ENCODE measurements at regions of chr10 and their contacts with region 1.

Region 1: GRCh38 chr10:103244663-103245271 is 920 bp upstream of the RPEL1 start:
- DNase-seq: peak; percentile 81
- ATAC-seq: peak; percentile 77
- H3K4me3 ChIP-seq: no peak overlapping the region
- H3K4me3 Mint-ChIP-seq: no peak overlapping the region
- H3K27ac ChIP-seq: no peak overlapping the region
- H3K27ac Mint-ChIP-seq: no peak overlapping the region
- H3K4me1 ChIP-seq: peaks cover 18 to 26% of the 10 kb centered on the region in 2 donors
- H3K4me1 Mint-ChIP-seq: peaks cover 16% of the 10 kb centered on the region
- H3K27me3 ChIP-seq: peaks cover 0 to 3% (median 0%) of the 10 kb centered on the region in 4 experiments
- H3K27me3 Mint-ChIP-seq: no peaks in the 10 kb centered on the region
- CTCF ChIP-seq: peak; percentile 92

Region 2: GRCh38 chr10:102835007-102835482 is 409.7 kb before region 1 on chr10:
- CTCF ChIA-PET with region 1: interaction called, 54 read pairs
- POLR2A ChIA-PET with region 1: no interaction called
- intact Hi-C with region 1: no loop called
- DNase-seq: peak; percentile 82
- ATAC-seq: peak; percentile 96
- H3K4me3 ChIP-seq: no peak overlapping the region
- H3K4me3 Mint-ChIP-seq: no peak overlapping the region
- H3K27ac ChIP-seq: no peak overlapping the region
- H3K27ac Mint-ChIP-seq: no peak overlapping the region
- H3K4me1 ChIP-seq: peaks cover 0 to 4% of the 10 kb centered on the region in 2 donors
- H3K4me1 Mint-ChIP-seq: peaks cover 2% of the 10 kb centered on the region
- H3K27me3 ChIP-seq: peaks cover 0 to 11% (median 2%) of the 10 kb centered on the region in 4 experiments
- H3K27me3 Mint-ChIP-seq: peaks cover 6% of the 10 kb centered on the region
- CTCF ChIP-seq: peak; percentile 89

Region 3: GRCh38 chr10:103069453-103070331 is 175.1 kb before region 1 on chr10:
- CTCF ChIA-PET with region 1: interaction called, 24 read pairs
- POLR2A ChIA-PET with region 1: no interaction called
- intact Hi-C with region 1: loop called (anchors 1 kb)
- DNase-seq: peak; percentile 82
- ATAC-seq: peak; percentile 80
- H3K4me3 ChIP-seq: peak overlapping the region in 1 of 5 experiments; percentile 39
- H3K4me3 Mint-ChIP-seq: peak overlapping the region; percentile 64
- H3K27ac ChIP-seq: peak overlapping the region; percentile 50 to 73
- H3K27ac Mint-ChIP-seq: peak overlapping the region; percentile 67
- H3K4me1 ChIP-seq: peaks cover 26% of the 10 kb centered on the region in 2 donors
- H3K4me1 Mint-ChIP-seq: peaks cover 33% of the 10 kb centered on the region
- H3K27me3 ChIP-seq: no peaks in the 10 kb centered on the region
- H3K27me3 Mint-ChIP-seq: no peaks in the 10 kb centered on the region
- CTCF ChIP-seq: peak; percentile 80

Region 4: GRCh38 chr10:103098240-103098639 is 146.5 kb before region 1 on chr10:
- CTCF ChIA-PET with region 1: interaction called, 10 read pairs
- POLR2A ChIA-PET with region 1: no interaction called
- intact Hi-C with region 1: no loop called
- DNase-seq: no peak
- ATAC-seq: no peak
- H3K4me3 ChIP-seq: no peak overlapping the region
- H3K4me3 Mint-ChIP-seq: no peak overlapping the region
- H3K27ac ChIP-seq: no peak overlapping the region
- H3K27ac Mint-ChIP-seq: no peak overlapping the region
- H3K4me1 ChIP-seq: no peaks in the 10 kb centered on the region
- H3K4me1 Mint-ChIP-seq: peaks cover 16% of the 10 kb centered on the region
- H3K27me3 ChIP-seq: no peaks in the 10 kb centered on the region
- H3K27me3 Mint-ChIP-seq: no peaks in the 10 kb centered on the region
- CTCF ChIP-seq: no peak

Region 5: DNA sequence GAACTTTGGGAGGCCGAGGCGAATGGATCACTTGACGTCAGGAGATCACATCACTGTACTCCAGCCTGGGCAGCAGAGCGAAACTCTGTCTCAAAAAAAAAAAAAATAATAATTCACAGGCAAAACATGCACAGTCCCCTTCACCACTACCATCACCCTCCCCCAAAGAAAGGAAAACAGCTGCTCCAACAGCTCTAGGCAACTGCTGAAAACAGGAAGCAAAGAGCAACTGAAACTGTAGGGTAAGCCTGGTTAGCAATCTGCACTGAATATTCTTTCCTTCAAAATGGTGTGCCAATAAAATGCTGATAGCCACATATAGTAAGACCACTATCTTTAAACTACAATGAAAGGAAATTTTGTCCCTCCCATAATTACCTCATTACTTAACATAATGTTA is 63.5 kb before region 1 on chr10:
- CTCF ChIA-PET with region 1: interaction called, 9 read pairs
- POLR2A ChIA-PET with region 1: interaction called, 3 read pairs
- intact Hi-C with region 1: loop called (anchors 2 kb)
- DNase-seq: peak; percentile 77
- ATAC-seq: peak; percentile 94
- H3K4me3 ChIP-seq: peak overlapping the region in 2 of 5 experiments; percentile 14 to 25
- H3K4me3 Mint-ChIP-seq: peak overlapping the region; percentile 83
- H3K27ac ChIP-seq: peak overlapping the region; percentile 56 to 80
- H3K27ac Mint-ChIP-seq: peak overlapping the region; percentile 86
- H3K4me1 ChIP-seq: peaks cover 48 to 52% of the 10 kb centered on the region in 2 donors
- H3K4me1 Mint-ChIP-seq: peaks cover 66% of the 10 kb centered on the region
- H3K27me3 ChIP-seq: no peaks in the 10 kb centered on the region
- H3K27me3 Mint-ChIP-seq: no peaks in the 10 kb centered on the region
- CTCF ChIP-seq: no peak

Region 6: GRCh38 chr10:103227416-103227815 is 17.4 kb before region 1 on chr10:
- CTCF ChIA-PET with region 1: interaction called, 11 read pairs
- POLR2A ChIA-PET with region 1: interaction called, 5 read pairs
- intact Hi-C with region 1: no loop called
- DNase-seq: no peak
- ATAC-seq: no peak
- H3K4me3 ChIP-seq: no peak overlapping the region
- H3K4me3 Mint-ChIP-seq: no peak overlapping the region
- H3K27ac ChIP-seq: no peak overlapping the region
- H3K27ac Mint-ChIP-seq: no peak overlapping the region
- H3K4me1 ChIP-seq: no peaks in the 10 kb centered on the region
- H3K4me1 Mint-ChIP-seq: no peaks in the 10 kb centered on the region
- H3K27me3 ChIP-seq: no peaks in the 10 kb centered on the region
- H3K27me3 Mint-ChIP-seq: no peaks in the 10 kb centered on the region
- CTCF ChIP-seq: no peak